ENCODE measurements at regions of chr6 and their contacts with region 1.

Region 1: GRCh38 chr6:125974214-125974866 is 12.0 kb upstream of the TRMT11 start:
- DNase-seq: peak in 6 of 9 donors; percentile 11 to 56 (median 43)
- ATAC-seq: peak; percentile 80
- H3K4me3 ChIP-seq: no peak overlapping the region
- H3K4me3 Mint-ChIP-seq: peak overlapping the region in 3 of 10 donors; percentile 24 to 54 (median 32)
- H3K27ac ChIP-seq: no peak overlapping the region
- H3K27ac Mint-ChIP-seq: peak overlapping the region in 7 of 9 donors; percentile 5 to 80 (median 46)
- H3K4me1 ChIP-seq: no peaks in the 10 kb centered on the region
- H3K4me1 Mint-ChIP-seq: peaks cover 3 to 13% (median 11%) of the 10 kb centered on the region in 7 donors
- H3K27me3 ChIP-seq: no peaks in the 10 kb centered on the region
- H3K27me3 Mint-ChIP-seq: no peaks in the 10 kb centered on the region

Region 2: GRCh38 chr6:125314019-125314581 is 660.2 kb before region 1 on chr6:
- CTCF ChIA-PET with region 1: interaction called, 6 read pairs
- POLR2A ChIA-PET with region 1: no interaction called
- intact Hi-C with region 1: loop called (anchors 1 kb)
- DNase-seq: peak in 3 of 9 donors; percentile 17 to 27 (median 22)
- ATAC-seq: peak; percentile 76
- H3K4me3 ChIP-seq: no peak overlapping the region
- H3K4me3 Mint-ChIP-seq: no peak overlapping the region
- H3K27ac ChIP-seq: no peak overlapping the region
- H3K27ac Mint-ChIP-seq: no peak overlapping the region
- H3K4me1 ChIP-seq: no peaks in the 10 kb centered on the region
- H3K4me1 Mint-ChIP-seq: peaks cover 0 to 2% (median 0%) of the 10 kb centered on the region in 7 donors
- H3K27me3 ChIP-seq: peaks cover 0 to 6% of the 10 kb centered on the region in 2 donors
- H3K27me3 Mint-ChIP-seq: peaks cover 0 to 22% (median 4%) of the 10 kb centered on the region in 5 donors

Region 3: DNA sequence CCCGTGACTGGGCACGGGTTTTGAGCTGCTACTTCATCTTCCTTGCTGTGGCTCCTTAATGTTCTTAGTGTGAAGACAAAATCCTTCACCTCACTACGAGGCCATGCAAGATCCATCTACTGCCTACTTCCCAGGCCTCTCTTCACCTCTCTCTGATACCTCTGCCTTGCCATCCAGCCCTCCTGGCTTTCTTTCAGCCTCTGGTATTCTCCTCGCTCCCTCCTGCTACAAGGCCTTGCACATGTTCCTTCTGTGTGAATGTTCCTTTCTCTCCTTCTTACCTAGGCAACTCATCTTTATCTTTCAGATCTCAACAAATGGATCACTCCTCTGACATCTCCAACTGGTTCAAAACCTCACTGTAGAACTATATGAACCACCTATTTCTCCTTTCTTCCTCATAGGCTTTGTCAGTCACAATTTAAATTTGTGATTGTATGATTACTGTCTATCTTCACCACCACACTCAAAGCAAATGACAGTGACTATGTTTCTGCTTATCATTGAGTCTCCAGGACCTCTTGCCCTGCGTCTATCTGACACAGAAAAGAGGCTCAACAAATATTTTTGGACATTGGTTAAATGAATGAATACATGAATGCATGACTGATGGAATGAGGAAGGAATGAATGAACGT is 205.1 kb before region 1 on chr6:
- CTCF ChIA-PET with region 1: no interaction called
- POLR2A ChIA-PET with region 1: no interaction called
- intact Hi-C with region 1: loop called in 1 of 2 experiments (anchors 1 kb)
- DNase-seq: no peak
- ATAC-seq: no peak
- H3K4me3 ChIP-seq: no peak overlapping the region
- H3K4me3 Mint-ChIP-seq: no peak overlapping the region
- H3K27ac ChIP-seq: no peak overlapping the region
- H3K27ac Mint-ChIP-seq: no peak overlapping the region
- H3K4me1 ChIP-seq: no peaks in the 10 kb centered on the region
- H3K4me1 Mint-ChIP-seq: peaks cover 0 to 4% (median 1%) of the 10 kb centered on the region in 7 donors
- H3K27me3 ChIP-seq: no peaks in the 10 kb centered on the region
- H3K27me3 Mint-ChIP-seq: peaks cover 7 to 48% (median 24%) of the 10 kb centered on the region in 5 donors

Region 4: DNA sequence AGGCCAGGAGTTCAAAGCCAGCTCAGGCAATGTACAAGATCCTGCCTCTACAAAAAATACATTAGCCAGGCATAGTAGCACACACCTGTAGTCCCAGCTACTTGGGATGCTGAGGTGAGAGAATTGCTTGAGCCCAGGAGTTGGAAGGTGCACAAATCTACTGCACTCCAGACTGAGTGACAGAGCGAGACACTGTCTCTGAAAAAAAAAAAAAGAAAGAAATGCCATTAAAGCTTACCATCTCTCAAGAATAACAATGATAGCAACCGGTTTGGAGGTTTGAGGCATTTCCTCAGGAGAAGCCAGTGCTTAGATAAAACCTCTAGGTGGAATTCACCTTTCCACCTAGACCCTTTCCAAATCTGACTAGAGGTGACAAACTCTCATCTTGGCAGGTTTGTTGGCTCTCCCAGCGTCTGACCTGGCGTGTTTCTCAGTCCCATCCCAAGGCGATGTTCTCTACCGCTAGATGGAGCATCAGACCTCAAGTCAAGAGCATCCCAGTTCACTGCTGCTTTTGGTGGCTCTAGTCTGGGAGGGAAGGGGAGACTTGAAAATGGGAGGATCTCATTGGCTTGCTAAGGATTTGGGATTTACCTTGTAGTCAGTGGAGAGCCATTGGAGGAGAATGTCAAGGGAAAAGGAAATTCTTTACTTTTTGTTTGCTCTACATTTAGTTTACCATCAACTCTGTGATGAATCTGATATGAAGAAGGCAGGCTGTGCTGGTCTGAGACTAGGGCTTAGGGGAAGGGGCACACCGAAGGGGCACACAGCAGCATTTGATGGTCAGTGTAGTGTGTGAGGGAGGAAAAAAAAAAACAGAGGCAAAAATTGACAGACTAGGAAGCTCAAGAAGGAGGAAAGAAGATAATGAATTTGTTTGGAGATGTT is 115.7 kb before region 1 on chr6:
- CTCF ChIA-PET with region 1: no interaction called
- POLR2A ChIA-PET with region 1: no interaction called
- intact Hi-C with region 1: loop called (anchors 1 kb)
- DNase-seq: peak in 3 of 9 donors; percentile 10 to 26 (median 23)
- ATAC-seq: peak; percentile 52
- H3K4me3 ChIP-seq: no peak overlapping the region
- H3K4me3 Mint-ChIP-seq: no peak overlapping the region
- H3K27ac ChIP-seq: no peak overlapping the region
- H3K27ac Mint-ChIP-seq: peak overlapping the region in 1 of 9 donors; percentile 79
- H3K4me1 ChIP-seq: no peaks in the 10 kb centered on the region
- H3K4me1 Mint-ChIP-seq: peaks cover 0 to 7% (median 3%) of the 10 kb centered on the region in 7 donors
- H3K27me3 ChIP-seq: no peaks in the 10 kb centered on the region
- H3K27me3 Mint-ChIP-seq: no peaks in the 10 kb centered on the region

Region 5: DNA sequence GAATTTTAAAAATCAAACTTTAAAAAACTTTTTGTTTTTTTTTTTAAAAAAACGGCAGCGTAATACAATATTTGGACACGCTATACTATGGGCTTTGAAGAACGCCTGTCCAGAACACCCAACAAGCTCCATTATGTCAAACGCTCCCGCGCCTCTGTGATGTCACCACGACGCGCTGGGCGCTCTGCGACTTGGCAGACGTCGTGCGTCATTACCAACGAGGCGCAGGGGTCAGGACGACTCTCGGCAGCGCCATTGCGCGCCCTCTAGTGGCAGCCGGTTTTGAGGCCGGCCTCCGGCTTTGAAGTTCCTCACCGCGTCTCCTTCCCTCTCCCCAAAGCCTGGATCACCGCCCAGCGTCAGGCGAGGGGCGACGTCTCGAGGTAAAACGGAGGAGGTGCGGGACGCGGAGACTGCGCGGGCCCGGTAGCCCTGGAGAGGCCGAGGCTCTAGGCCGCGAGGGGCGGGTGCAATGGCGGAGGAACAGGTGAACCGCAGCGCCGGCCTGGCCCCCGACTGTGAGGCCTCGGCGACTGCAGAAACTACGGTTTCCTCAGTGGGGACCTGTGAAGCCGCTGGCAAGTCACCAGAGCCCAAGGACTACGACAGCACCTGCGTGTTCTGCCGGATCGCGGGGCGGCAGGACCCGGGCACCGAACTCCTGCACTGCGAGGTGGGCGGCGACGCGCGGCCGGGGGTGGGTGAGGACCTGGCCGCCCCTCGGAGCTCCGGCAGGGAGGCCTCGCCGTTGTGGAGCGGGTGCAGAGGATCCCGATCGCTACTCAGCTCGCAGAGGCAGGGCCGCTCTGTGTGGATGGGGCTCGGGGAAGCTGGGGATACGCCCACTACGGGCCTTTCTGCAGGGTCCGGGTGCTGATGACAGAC is 17.6 kb before region 1 on chr6 and contains the start of gene HINT3:
- CTCF ChIA-PET with region 1: interaction called, 7 read pairs
- POLR2A ChIA-PET with region 1: interaction called, 6 read pairs
- intact Hi-C with region 1: loop called in 1 of 2 experiments (anchors 1 kb)
- DNase-seq: peak; percentile 94 to 98 (median 97)
- ATAC-seq: peak; percentile 96
- H3K4me3 ChIP-seq: peak within 1 kb of the TSS; percentile 78
- H3K4me3 Mint-ChIP-seq: peak within 1 kb of the TSS in 1 of 10 donors; percentile 69
- H3K27ac ChIP-seq: peak within 1 kb of the TSS; percentile 98
- H3K27ac Mint-ChIP-seq: peak within 1 kb of the TSS in 3 of 9 donors; percentile 62 to 76 (median 73)
- H3K4me1 ChIP-seq: peaks cover 16 to 18% of the 10 kb centered on the region in 2 donors
- H3K4me1 Mint-ChIP-seq: peaks cover 0 to 22% (median 7%) of the 10 kb centered on the region in 7 donors
- H3K27me3 ChIP-seq: no peaks in the 10 kb centered on the region
- H3K27me3 Mint-ChIP-seq: peaks cover 0 to 7% (median 5%) of the 10 kb centered on the region in 5 donors
- total RNA-seq, gene HINT3: 7.7 to 12.4 (median 9.5) TPM

Region 6: GRCh38 chr6:126112144-126112632 is 137.8 kb after region 1 on chr6:
- CTCF ChIA-PET with region 1: no interaction called
- POLR2A ChIA-PET with region 1: no interaction called
- intact Hi-C with region 1: no loop called
- DNase-seq: no peak
- ATAC-seq: no peak
- H3K4me3 ChIP-seq: no peak overlapping the region
- H3K4me3 Mint-ChIP-seq: no peak overlapping the region
- H3K27ac ChIP-seq: no peak overlapping the region
- H3K27ac Mint-ChIP-seq: no peak overlapping the region
- H3K4me1 ChIP-seq: no peaks in the 10 kb centered on the region
- H3K4me1 Mint-ChIP-seq: no peaks in the 10 kb centered on the region
- H3K27me3 ChIP-seq: no peaks in the 10 kb centered on the region
- H3K27me3 Mint-ChIP-seq: no peaks in the 10 kb centered on the region

Measured in naive thymus-derived CD4-positive, alpha-beta T cell (primary cell).